WTC11 (cell line): ENCODE measurements at regions of chr1 and their contacts with region 1.

Region 1: DNA sequence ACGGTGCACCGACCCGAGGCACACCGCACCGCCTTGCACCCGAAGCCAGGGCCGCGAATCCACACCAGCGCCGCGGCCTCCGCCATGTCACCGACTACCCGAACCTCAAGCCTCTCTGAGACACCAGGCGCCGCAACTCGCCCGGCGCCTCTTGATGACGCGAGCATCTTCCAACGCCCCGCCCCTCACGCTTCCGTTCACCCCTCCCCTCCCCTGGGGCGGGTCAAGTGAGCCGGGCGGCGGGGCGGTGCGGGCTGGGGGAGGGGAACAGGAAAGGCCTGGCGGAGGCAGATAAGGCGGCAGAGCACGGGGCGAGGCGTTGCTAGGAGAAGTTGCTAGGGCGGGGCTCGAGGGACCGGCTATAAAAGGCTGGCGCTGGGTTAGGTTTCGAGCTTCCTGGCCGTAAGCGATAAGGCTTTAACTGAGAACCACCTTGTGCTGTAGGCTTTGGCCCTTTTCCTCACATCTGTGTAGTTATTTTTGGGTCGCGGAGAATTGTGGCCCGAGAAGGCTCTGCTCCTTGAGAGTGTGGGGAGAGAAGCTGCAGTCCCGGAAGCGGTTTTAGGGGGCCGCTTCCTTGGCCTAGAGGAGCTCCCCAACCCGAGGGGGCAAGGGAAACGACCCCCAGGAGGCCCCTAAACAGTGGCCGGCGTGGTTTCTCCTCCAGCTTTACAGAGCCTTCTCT is at the start of gene SDE2:
- DNase-seq: peak; percentile 100
- ATAC-seq: peak; percentile 94
- H3K4me3 Mint-ChIP-seq: peak within 1 kb of the TSS; percentile 100
- H3K27ac Mint-ChIP-seq: peak within 1 kb of the TSS; percentile 100
- H3K4me1 Mint-ChIP-seq: peaks cover 27% of the 10 kb centered on the region
- H3K27me3 Mint-ChIP-seq: no peaks in the 10 kb centered on the region
- CTCF ChIP-seq: no peak
- total RNA-seq, gene SDE2: 13.5 to 17.2 TPM (median 14.6 TPM) in 3 replicates

Region 2: DNA sequence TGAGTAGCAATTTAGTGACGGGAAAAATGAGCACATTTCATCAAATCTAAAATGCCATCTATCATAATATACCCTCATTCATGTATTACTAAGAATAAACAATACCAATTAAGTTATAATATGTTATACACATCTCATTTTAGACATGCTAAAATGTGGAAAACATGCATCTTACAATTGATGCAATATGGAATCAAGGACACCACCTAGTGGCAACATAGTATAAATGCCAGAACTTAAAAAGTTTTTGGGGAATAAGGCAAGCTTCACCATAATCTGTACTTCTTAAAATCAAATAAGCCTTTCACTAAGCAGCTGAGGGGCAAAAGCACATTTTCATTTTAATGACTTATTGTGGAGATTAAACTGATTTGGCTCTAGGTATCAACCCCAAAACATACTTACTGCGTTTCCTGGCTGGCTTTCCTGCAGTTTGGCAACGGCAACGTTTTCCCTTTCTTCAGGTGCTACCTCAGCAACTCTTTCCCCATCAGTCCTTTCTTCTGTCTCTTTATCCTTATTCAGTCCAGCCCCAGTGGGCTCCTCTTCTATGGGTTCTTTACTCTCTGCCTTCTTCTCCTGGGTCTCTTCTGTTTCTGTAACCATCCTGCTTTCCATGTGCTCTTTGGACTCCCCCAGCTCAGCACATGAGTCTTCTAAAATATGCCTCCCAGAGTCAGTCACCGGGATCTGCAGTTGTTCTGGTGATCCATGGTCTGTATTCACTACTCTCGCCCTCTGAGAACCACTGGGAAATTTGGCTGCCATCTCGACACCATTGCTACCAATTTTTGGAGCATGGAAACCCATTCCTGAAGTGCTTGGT is 11.7 kb before region 1 on chr1:
- CTCF ChIA-PET with region 1: interaction called, 13 read pairs
- POLR2A ChIA-PET with region 1: no interaction called
- DNase-seq: no peak
- ATAC-seq: no peak
- H3K4me3 Mint-ChIP-seq: no peak overlapping the region
- H3K27ac Mint-ChIP-seq: peak overlapping the region; percentile 43; the same call in 1 of the 2 replicates
- H3K4me1 Mint-ChIP-seq: no peaks in the 10 kb centered on the region
- H3K27me3 Mint-ChIP-seq: no peaks in the 10 kb centered on the region
- CTCF ChIP-seq: peak; percentile 64

Region 3: DNA sequence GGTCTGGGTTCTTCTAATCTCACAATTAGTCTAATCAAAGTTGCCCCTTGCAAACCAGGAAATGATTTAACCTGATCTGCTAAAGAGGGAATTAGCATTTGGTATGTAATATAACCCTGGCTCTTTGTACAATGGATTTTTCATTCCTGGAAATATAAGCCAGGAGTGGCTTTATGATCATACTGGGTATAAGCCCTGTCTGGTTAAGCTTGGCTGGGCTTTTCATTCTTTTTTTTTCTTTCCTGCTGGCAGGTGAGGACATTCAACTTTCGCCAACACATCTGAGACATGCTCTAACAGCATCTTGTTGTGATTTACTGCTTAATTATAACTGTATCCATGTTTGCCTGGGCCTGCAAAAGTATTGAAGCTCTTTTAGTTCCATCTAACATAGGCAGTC is 20.2 kb after region 1 on chr1:
- CTCF ChIA-PET with region 1: no interaction called
- POLR2A ChIA-PET with region 1: no interaction called
- DNase-seq: no peak
- ATAC-seq: no peak
- H3K4me3 Mint-ChIP-seq: no peak overlapping the region
- H3K27ac Mint-ChIP-seq: no peak overlapping the region
- H3K4me1 Mint-ChIP-seq: 0 out of 2 replicates have a peak, but pooled peaks cover 3% of the 10 kb centered on the region
- H3K27me3 Mint-ChIP-seq: no peaks in the 10 kb centered on the region
- CTCF ChIP-seq: no peak